Activated T-helper 1 cell treated with anti-CD3 and anti-CD28 coated beads, Interleukin-12 subunit alpha, Interleukin-12 subunit beta, Interleukin-2, Interleukin-4 antibody, amounts not matched to agents 30 ng/mL and 10 ng/mL and 1 ng/mL, durations not matched to agents 14 hours and 24 hours and 36 hours (primary cell): ENCODE measurements at regions of chr10 and their contacts with region 1.

Region 1: DNA sequence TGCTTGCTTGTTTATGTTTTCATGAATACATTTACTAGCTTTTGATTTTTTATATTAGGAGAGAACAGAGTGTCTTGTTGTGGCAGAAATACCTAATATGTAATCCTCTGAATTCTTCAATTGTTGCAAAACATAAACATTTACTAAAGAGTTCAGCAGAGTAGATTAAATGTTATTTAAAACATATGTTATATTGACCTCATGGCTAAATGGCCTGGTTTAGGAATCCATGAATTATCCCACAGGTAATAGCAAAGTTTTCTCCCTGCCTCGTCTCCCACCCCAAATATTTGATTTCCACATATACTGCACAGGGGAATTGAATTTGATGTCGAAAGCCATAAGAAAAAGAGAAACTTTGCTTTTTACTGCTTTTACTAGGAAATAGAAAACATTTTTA is 111.8 kb downstream of the ADK start:
- DNase-seq: no peak
- H3K4me3 Mint-ChIP-seq: no peak overlapping the region
- H3K27ac Mint-ChIP-seq: no peak overlapping the region
- H3K4me1 Mint-ChIP-seq: peaks cover 13% of the 10 kb centered on the region
- H3K27me3 Mint-ChIP-seq: no peaks in the 10 kb centered on the region

Region 2: DNA sequence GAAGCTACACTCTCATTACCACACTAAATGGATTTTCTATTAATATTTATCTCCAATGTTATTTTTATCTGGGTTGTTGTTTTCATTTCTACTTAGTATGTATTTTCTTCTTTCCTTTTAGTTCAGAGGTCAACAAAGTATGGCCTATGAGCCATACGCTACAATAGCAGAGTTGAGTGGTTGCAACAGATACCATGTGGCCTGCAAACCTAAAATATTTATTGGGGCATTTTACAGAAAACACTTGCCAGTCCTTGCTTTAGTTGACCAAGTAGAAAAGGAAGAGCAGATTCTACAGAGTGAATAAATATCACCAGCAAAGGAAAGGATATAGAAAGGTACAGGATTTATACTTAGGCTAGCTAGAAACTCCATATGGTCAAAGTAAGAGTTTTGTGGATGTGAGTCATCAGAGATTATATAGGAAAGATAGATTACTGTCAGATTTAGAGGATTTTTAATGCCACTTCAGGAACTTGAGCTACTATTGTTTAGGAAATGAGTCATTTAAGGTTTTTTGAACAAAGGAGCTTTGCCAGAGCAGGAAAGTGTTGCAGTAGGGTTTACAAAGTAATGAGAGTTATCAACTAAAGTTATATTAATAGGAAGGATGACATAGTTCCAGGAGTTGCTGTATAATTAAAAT is 240.2 kb after region 1 on chr10:
- intact Hi-C with region 1: loop called (anchors 2 kb)
- DNase-seq: no peak
- H3K4me3 Mint-ChIP-seq: no peak overlapping the region
- H3K27ac Mint-ChIP-seq: peak overlapping the region; percentile 9
- H3K4me1 Mint-ChIP-seq: peaks cover 40% of the 10 kb centered on the region
- H3K27me3 Mint-ChIP-seq: no peaks in the 10 kb centered on the region

Region 3: DNA sequence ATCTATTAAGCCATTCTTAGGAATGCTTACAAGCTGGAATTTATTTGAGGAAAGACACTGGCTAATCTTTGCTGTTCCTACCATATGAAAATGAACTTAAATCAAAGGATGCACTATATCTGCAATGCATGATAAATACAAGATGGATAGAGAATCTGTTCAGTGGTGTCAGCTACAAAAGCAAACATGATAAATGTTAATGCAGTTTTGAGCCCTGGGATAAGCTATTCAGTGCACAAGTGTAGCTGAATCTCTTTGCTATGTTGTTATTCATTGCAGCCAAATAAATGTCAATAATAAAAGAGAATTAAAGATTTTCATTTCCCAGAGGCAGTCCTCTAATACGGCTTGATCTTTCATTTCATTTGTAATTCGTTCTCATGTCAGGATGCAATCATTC is 339.7 kb after region 1 on chr10:
- intact Hi-C with region 1: no loop called
- DNase-seq: no peak
- H3K4me3 Mint-ChIP-seq: no peak overlapping the region
- H3K27ac Mint-ChIP-seq: no peak overlapping the region
- H3K4me1 Mint-ChIP-seq: peaks cover 7% of the 10 kb centered on the region
- H3K27me3 Mint-ChIP-seq: no peaks in the 10 kb centered on the region

Region 4: GRCh38 chr10:74640134-74640931 is 377.5 kb after region 1 on chr10:
- intact Hi-C with region 1: loop called (anchors 5 kb)
- DNase-seq: no peak
- H3K4me3 Mint-ChIP-seq: no peak overlapping the region
- H3K27ac Mint-ChIP-seq: no peak overlapping the region
- H3K4me1 Mint-ChIP-seq: no peaks in the 10 kb centered on the region
- H3K27me3 Mint-ChIP-seq: no peaks in the 10 kb centered on the region

Region 5: DNA sequence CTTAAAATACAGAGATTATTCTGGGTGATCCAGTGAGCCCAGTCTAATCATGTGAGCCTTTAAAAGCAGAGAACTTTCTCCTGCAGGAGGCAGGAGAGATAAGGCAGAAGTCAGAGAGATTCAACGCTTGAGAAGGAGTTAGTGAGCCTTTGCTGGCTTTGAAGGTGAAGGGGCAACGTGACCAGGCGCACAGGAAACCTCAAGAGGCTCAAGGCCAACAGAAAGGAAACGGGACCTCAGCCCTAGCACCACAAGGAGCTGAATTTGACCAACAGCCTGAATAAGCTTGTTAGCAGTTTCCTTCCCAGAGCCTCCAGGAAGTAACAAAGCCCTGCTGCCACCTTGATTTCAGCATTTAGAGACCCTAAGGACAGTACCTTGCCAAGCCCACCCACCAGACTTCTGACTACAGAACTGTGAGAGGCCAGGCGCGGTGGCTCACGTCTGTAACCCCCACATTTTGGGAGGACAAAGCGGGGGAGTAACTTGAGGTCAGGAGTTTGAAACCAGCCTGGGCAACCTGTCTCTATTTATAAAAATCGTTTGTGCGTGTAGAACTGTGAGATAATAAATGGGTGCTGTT is 476.2 kb after region 1 on chr10:
- intact Hi-C with region 1: loop called (anchors 2 kb)
- DNase-seq: peak; percentile 14
- H3K4me3 Mint-ChIP-seq: peak overlapping the region; percentile 42
- H3K27ac Mint-ChIP-seq: peak overlapping the region; percentile 44
- H3K4me1 Mint-ChIP-seq: peaks cover 26% of the 10 kb centered on the region
- H3K27me3 Mint-ChIP-seq: no peaks in the 10 kb centered on the region

Region 6: GRCh38 chr10:74816824-74817498 is 554.1 kb after region 1 on chr10:
- intact Hi-C with region 1: no loop called
- DNase-seq: no peak
- H3K4me3 Mint-ChIP-seq: no peak overlapping the region
- H3K27ac Mint-ChIP-seq: no peak overlapping the region
- H3K4me1 Mint-ChIP-seq: peaks cover 5% of the 10 kb centered on the region
- H3K27me3 Mint-ChIP-seq: no peaks in the 10 kb centered on the region

Region 7: GRCh38 chr10:75099952-75100763 is 837.3 kb after region 1 on chr10:
- intact Hi-C with region 1: loop called (anchors 1 kb)
- DNase-seq: peak; percentile 67
- H3K4me3 Mint-ChIP-seq: no peak overlapping the region
- H3K27ac Mint-ChIP-seq: no peak overlapping the region
- H3K4me1 Mint-ChIP-seq: peaks cover 5% of the 10 kb centered on the region
- H3K27me3 Mint-ChIP-seq: no peaks in the 10 kb centered on the region